Left ventricle myocardium inferior (tissue), 1 donor: ENCODE measurements at regions of chr1 and their contacts with region 1.

Region 1: DNA sequence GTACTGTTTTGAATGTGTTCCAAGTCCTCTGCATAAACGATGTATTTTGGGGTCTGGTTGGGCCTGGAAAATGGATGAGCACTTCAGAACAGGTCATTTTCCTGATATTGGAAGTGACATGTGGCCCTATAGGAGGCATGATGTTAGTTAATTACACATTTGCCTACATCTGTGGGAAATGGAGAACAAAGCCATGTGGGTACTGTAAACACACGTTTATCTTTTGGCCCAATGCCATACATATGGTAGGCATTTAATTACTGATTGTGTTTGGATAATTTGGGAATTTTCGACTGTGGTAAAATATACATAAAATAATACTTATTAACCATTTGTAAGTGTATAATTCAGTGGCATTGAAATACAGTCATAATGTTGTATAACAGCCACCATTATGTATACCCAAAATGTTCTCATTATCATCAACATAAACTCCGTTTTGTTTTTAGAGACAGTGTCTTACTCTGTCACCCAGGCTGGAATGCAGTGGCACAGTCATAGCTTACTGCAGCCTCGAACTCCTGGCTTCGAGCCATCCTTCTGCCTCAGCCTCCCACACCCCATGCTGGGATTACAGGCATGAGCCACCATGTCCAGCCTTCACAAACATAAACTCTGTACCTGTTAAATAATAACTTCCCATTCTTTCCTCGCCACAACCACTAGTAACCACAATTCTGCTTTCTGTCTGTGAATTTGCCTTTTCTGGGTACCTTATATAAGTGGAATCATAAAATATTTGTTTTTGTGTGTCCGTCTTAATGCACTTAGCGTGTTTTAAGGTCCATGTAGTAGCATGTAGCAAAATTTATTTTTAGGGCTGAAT is 11.9 kb upstream of the RNPEP start:
- DNase-seq: no peak
- H3K4me3 ChIP-seq: no peak overlapping the region
- H3K27ac ChIP-seq: no peak overlapping the region
- H3K4me1 ChIP-seq: peaks cover 9% of the 10 kb centered on the region
- H3K27me3 ChIP-seq: no peaks in the 10 kb centered on the region
- CTCF ChIP-seq: no peak

Region 2: DNA sequence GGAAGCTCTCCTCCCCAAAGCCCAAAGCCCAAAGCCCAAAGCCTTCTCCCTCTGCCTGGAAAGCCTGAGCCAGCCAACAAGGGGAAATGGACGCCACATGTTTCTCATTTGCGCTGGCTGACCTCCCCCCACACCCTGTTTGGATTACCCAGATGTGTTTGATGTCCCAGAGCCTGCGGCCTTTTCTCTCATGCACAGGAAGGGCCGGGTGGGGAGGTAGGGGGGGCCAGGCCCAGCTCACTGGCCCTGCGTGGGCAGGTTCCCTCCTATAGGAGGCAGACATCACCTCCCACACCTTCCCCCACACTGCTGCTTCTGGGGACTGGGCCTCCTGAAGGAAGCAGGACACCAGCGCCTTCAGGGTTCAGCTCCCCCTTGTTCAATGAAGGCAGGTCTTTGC is 315.3 kb before region 1 on chr1:
- intact Hi-C with region 1: no loop called
- DNase-seq: no peak
- H3K4me3 ChIP-seq: no peak overlapping the region
- H3K27ac ChIP-seq: peak overlapping the region; percentile 48
- H3K4me1 ChIP-seq: peaks cover 95% of the 10 kb centered on the region
- H3K27me3 ChIP-seq: no peaks in the 10 kb centered on the region
- CTCF ChIP-seq: no peak

Region 3: DNA sequence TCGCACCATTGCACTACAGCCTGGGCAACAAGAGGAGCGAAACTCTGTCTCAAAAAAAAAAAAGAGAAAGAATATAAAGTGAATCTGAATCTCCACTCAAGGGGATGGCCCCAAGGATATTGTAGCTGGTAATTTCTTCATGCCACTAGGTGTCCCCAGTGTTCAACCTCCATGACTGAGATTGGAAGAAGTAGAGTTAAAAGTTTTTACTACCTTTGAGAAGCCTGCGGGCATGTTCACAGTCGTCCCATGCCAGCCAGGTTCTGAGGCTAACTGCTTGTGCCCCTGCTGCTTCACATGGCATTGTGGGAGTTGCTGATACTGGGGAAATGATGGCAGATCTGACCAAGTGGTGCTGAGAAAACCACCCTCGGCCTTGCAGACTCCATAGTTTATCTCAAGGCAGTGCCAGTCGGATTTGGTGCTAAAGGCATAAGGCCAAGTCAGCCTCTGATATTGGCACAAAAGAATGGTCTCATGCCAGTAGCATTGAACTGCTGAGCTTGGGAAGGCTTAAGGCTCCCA is 92.6 kb before region 1 on chr1:
- intact Hi-C with region 1: loop called (anchors 5 kb)
- DNase-seq: no peak
- H3K4me3 ChIP-seq: no peak overlapping the region
- H3K27ac ChIP-seq: peak overlapping the region; percentile 55
- H3K4me1 ChIP-seq: peaks cover 28% of the 10 kb centered on the region
- H3K27me3 ChIP-seq: no peaks in the 10 kb centered on the region
- CTCF ChIP-seq: peak; percentile 73

Region 4: GRCh38 chr1:201895913-201896807 is 74.4 kb before region 1 on chr1:
- intact Hi-C with region 1: loop called (anchors 5 kb)
- DNase-seq: peak; percentile 89
- H3K4me3 ChIP-seq: peak overlapping the region; percentile 29
- H3K27ac ChIP-seq: peak overlapping the region; percentile 73
- H3K4me1 ChIP-seq: peaks cover 27% of the 10 kb centered on the region
- H3K27me3 ChIP-seq: no peaks in the 10 kb centered on the region
- CTCF ChIP-seq: peak; percentile 96